ENCODE measurements at regions of chr4 and their contacts with region 1.

Region 1: DNA sequence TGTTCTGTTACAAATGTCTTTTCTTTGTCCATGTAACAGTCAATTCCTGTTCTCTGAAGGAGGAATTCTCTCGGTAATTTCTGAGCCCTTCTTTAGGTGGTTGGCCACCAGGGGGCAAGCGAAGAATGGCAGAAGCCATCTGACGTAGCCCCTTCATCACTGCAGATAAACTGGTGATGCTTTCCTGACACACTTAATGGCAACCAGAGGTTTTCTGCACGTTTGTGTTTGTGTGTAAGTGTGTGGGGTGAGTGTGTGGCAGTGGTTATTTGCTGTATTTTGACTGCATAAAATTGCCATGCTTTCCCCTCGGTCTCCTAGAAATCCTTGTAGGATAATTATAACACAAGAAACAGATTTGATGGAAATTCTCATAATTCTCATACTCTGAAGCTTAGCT is 64.8 kb upstream of the STOX2 start:
- DNase-seq: peak; percentile 93
- ATAC-seq: peak; percentile 88

Region 2: GRCh38 chr4:184168406-184169019 is 328.2 kb after region 1 on chr4:
- intact Hi-C with region 1: loop called (anchors 5 kb)
- DNase-seq: peak; percentile 87
- ATAC-seq: peak; percentile 98

Region 3: DNA sequence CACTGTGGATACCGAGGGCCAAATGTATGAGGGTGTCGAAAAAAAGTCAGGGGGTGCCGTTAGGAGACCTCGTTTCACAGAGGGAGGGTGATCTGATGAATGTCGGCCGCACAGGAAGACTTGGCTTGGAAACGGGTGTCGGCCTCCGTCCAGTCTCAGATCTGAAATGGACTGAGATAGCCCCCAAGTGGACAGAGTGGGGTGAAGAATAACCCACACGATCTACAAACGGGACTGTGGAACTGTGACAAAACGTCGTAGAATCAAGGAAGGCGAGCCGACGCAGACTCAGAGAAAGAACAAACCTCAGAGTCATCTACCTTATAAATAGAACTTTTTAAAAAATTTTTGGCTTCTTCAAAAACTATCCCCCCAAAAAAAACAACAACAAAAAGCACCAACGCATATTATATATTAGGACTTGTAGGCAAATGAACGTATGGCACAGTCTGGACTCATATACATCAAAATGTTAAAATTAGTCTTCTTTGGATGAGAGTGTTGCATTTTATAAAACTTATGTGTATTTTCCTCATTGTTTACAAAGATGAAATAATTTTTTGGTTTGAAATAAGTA is 697.8 kb after region 1 on chr4:
- intact Hi-C with region 1: no loop called
- DNase-seq: peak; percentile 93
- ATAC-seq: peak; percentile 97